Breast epithelium (tissue), 4 donors: ENCODE measurements at regions of chr18 and their contacts with region 1.

Region 1: GRCh38 chr18:44579028-44579702 is 101.5 kb upstream of the SETBP1 start:
- DNase-seq: no peak
- H3K4me3 ChIP-seq: no peak overlapping the region
- H3K27ac ChIP-seq: no peak overlapping the region
- H3K4me1 ChIP-seq: no peaks in the 10 kb centered on the region
- H3K27me3 ChIP-seq: no peaks in the 10 kb centered on the region
- CTCF ChIP-seq: peak in 1 of 3 donors; percentile 32
- POLR2A ChIP-seq: no peak

Region 2: DNA sequence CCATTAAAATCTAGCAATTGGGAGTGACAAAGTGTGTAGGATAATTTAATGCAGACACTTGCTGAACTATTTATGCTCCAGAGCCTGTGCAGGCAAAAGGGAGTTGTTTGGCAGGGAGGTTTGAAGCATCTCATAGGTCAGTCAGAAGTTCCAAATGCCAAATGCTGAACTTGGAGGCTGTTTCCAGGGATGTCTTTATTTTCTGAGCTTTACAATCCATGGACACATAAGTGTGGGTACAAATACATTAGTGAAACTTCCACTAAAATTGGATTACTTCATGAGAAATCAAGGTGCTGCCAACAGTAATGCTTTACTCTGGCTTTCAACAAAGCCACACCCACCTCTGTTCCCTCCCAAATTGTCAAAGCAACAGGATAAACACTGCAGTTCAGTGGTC is 320.6 kb before region 1 on chr18:
- intact Hi-C with region 1: no loop called
- DNase-seq: no peak
- H3K4me3 ChIP-seq: no peak overlapping the region
- H3K27ac ChIP-seq: no peak overlapping the region
- H3K4me1 ChIP-seq: no peaks in the 10 kb centered on the region
- H3K27me3 ChIP-seq: no peaks in the 10 kb centered on the region
- CTCF ChIP-seq: no peak
- POLR2A ChIP-seq: no peak

Region 3: DNA sequence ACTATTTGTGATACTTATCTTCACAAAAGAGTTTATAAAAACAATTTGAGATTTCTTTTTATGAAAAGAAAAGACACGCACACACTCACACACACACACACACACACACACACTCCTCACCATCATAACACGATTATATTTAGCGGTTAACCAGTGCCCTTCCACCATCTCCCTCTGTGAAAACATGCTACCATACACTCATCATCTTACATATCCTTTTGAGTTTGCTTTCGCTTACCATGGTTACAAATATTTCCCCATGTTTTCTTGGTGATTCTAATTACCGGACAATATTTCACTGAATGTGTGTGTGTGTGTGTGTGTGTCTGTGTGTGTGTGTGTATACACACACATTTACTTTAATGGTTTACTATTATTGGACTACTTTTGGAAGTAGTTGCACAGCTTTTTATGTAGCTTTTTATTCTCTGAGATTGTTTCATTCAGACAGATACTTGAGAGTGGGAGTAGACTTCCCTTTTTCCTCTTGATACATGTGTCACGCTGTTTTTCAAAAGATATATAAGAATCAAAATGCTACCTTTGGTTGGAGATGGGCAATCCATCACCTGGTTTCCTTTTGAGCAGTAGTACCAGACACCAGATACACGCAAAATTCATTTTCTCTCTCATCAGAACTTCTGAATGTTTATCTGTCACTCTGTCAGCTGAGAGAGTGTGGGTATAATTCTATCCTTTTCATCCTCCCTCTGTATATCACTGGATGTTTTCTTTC is 239.7 kb after region 1 on chr18:
- intact Hi-C with region 1: no loop called
- DNase-seq: no peak
- H3K4me3 ChIP-seq: no peak overlapping the region
- H3K27ac ChIP-seq: no peak overlapping the region
- H3K4me1 ChIP-seq: peaks cover 0 to 6% of the 10 kb centered on the region in 2 donors
- H3K27me3 ChIP-seq: no peaks in the 10 kb centered on the region
- CTCF ChIP-seq: no peak
- POLR2A ChIP-seq: no peak

Region 4: GRCh38 chr18:45008694-45009413 is 429.7 kb after region 1 on chr18:
- intact Hi-C with region 1: loop called (anchors 5 kb)
- DNase-seq: peak in 1 of 2 donors; percentile 41
- H3K4me3 ChIP-seq: no peak overlapping the region
- H3K27ac ChIP-seq: peak overlapping the region; percentile 3 to 40
- H3K4me1 ChIP-seq: peaks cover 0 to 3% of the 10 kb centered on the region in 2 donors
- H3K27me3 ChIP-seq: no peaks in the 10 kb centered on the region
- CTCF ChIP-seq: no peak
- POLR2A ChIP-seq: no peak